BJ (cell line): ENCODE measurements at regions of chr9 and their contacts with region 1.

Region 1: GRCh38 chr9:33287087-33287490 is 3.2 kb upstream of the NFX1 start:
- DNase-seq: peak; percentile 15
- H3K4me3 ChIP-seq: no peak overlapping the region
- H3K27me3 ChIP-seq: no peaks in the 10 kb centered on the region
- CTCF ChIP-seq: peak; percentile 85

Region 2: DNA sequence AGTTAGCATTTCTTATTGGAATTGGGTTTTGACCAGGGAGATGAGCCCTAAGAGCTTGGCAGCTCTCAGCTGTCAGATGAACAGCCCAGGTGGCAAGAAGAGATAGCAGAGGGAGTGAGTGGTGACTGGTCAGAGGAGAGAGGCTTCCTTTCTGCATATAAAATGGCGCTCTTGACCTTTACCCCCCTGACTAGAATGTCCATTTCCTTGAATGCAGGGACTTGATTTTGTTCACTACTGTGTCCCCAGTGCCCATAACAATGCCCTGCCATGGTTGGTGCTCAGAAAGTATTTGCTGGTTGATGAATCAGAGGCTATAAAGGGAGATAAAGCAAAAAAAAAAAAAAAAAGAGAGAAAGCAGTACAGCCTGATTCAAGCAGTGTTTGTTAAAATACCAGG is 15.0 kb before region 1 on chr9:
- CTCF ChIA-PET with region 1: interaction called, 10 read pairs
- POLR2A ChIA-PET with region 1: no interaction called
- DNase-seq: no peak
- H3K4me3 ChIP-seq: no peak overlapping the region
- H3K27me3 ChIP-seq: no peaks in the 10 kb centered on the region
- CTCF ChIP-seq: no peak